AG04450 (cell line): ENCODE measurements at regions of chr4 and their contacts with region 1.

Region 1: DNA sequence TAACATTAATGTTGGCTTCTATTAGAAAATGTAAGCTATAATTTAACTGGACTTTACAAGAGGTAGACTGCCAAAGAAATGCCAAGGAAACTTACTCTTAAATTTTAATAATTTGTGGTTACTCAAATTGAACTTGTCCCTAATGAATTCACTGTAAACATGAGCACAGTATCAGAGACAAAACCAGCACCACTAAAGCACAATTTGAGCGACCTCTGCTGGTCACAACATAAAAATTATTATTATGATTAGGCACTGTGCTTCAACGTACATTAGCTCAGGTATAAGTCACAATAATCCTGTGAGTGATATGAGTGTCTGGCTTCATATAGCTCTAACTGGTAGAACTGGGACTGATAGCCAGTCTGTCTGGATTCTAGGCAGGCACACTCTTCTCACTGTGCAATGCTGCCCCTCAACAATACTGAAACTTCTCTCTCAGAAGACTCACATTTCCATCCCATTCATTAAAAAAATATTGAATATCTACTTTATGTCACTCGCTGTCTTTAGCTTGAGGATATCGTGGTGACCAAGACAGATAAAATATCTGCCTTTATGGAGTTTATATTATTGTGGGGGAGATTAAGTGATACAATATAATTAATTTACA is 8.0 kb downstream of the NUDT6 start:
- DNase-seq: peak; percentile 29
- H3K4me3 ChIP-seq: peak overlapping the region; percentile 11; the same call in 1 of the 2 replicates
- H3K27ac ChIP-seq: no peak overlapping the region
- H3K27me3 ChIP-seq: no peaks in the 10 kb centered on the region
- CTCF ChIP-seq: peak; percentile 59

Region 2: GRCh38 chr4:122716825-122717448 is 197.5 kb before region 1 on chr4:
- CTCF ChIA-PET with region 1: interaction called, 40 read pairs
- POLR2A ChIA-PET with region 1: no interaction called
- DNase-seq: no peak
- H3K4me3 ChIP-seq: no peak overlapping the region
- H3K27ac ChIP-seq: no peak overlapping the region
- H3K27me3 ChIP-seq: no peaks in the 10 kb centered on the region
- CTCF ChIP-seq: peak; percentile 97

Region 3: GRCh38 chr4:122732329-122733026 is 181.9 kb before region 1 on chr4 and contains the start of gene BBS12:
- CTCF ChIA-PET with region 1: interaction called, 37 read pairs
- POLR2A ChIA-PET with region 1: no interaction called
- DNase-seq: peak; percentile 99
- H3K4me3 ChIP-seq: peak within 1 kb of the TSS; percentile 79
- H3K27ac ChIP-seq: peak within 1 kb of the TSS; percentile 62
- H3K27me3 ChIP-seq: no peaks in the 10 kb centered on the region
- CTCF ChIP-seq: peak; percentile 52
- polyA plus RNA-seq, gene BBS12: 2.2 and 3.2 TPM in 2 replicates

Region 4: DNA sequence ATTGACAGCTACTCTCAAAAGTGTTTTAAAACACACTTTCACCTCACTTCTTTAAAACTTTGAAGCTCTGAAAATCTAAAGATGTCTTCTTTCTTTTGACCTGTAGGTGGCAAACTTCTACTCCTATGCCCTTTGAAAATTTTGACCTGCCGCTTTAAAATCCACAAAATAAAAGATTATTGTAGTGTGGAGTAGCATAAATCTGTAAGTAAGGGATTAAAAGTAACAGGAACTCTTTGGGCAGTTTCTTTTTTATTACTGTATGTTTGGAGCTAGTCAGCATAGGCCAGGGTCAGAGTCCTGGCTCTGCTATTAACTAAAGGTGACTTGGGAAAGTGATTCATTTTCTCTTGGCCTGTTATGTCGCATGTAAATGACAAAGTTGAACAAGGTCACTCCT is 156.4 kb before region 1 on chr4:
- CTCF ChIA-PET with region 1: interaction called, 87 read pairs
- POLR2A ChIA-PET with region 1: no interaction called
- DNase-seq: no peak
- H3K4me3 ChIP-seq: no peak overlapping the region
- H3K27ac ChIP-seq: no peak overlapping the region
- H3K27me3 ChIP-seq: no peaks in the 10 kb centered on the region
- CTCF ChIP-seq: peak; percentile 66

Region 5: GRCh38 chr4:122831515-122832196 is 82.7 kb before region 1 on chr4:
- CTCF ChIA-PET with region 1: interaction called, 10 read pairs
- POLR2A ChIA-PET with region 1: no interaction called
- DNase-seq: no peak
- H3K4me3 ChIP-seq: no peak overlapping the region
- H3K27ac ChIP-seq: no peak overlapping the region
- H3K27me3 ChIP-seq: no peaks in the 10 kb centered on the region
- CTCF ChIP-seq: no peak

Region 6: GRCh38 chr4:122890142-122890769 is 24.1 kb before region 1 on chr4:
- CTCF ChIA-PET with region 1: interaction called, 47 read pairs
- POLR2A ChIA-PET with region 1: no interaction called
- DNase-seq: no peak
- H3K4me3 ChIP-seq: no peak overlapping the region
- H3K27ac ChIP-seq: no peak overlapping the region
- H3K27me3 ChIP-seq: no peaks in the 10 kb centered on the region
- CTCF ChIP-seq: no peak